ENCODE measurements at regions of chr17 and their contacts with region 1.

Region 1: DNA sequence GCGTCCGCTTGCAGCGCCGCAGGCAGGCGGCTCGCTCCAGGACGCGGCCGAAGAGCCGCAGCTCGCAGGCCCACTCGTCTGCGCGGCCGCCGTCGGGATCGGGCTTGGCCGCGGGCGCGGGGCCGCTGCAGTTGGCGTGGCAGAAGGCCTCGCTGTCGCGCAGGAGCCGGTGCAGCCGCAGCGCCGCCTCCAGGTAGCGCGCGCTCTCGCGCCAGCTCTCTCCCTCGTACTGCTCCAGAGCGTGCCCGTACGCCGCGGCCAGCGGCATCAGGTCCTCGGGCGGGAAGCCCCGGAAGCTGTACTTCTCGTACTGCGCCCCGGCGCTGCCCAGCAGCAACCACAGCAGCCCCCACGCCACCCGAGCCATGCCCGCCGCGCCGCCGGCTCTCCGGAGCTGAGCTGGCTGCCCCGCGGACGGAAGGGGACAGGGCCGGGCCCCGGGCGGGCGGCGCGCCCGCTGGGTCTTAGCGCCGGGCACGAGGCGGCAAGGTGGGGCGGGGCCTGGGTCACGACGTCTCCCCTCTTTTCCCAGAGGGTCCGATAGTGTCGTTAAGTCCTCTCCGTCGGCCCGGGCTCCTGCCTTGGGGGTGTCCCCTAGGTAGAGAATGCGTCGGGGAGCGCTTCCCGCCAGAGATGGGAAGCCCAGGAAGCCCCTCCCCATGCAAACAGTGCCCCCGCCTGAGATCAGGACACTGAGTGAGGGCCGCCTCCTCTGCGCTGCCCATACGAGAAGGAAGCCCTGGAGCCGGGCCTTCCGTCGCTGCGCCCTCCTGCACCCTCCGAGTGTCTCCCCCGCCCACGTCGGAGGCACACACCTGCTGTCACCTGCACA is at the start of gene P3H4:
- DNase-seq: peak; percentile 86
- ATAC-seq: peak; percentile 90
- H3K4me3 Mint-ChIP-seq: peak within 1 kb of the TSS; percentile 76
- H3K27ac Mint-ChIP-seq: peak within 1 kb of the TSS; percentile 58
- H3K4me1 Mint-ChIP-seq: peaks cover 22% of the 10 kb centered on the region
- H3K27me3 Mint-ChIP-seq: peaks cover 2% of the 10 kb centered on the region
- total RNA-seq, gene P3H4: 1.5 to 2.0 TPM

Region 2: GRCh38 chr17:41724476-41725050 is 87.2 kb before region 1 on chr17:
- CTCF ChIA-PET with region 1: no interaction called
- POLR2A ChIA-PET with region 1: no interaction called
- intact Hi-C with region 1: no loop called
- DNase-seq: no peak
- ATAC-seq: no peak
- H3K4me3 Mint-ChIP-seq: no peak overlapping the region
- H3K27ac Mint-ChIP-seq: no peak overlapping the region
- H3K4me1 Mint-ChIP-seq: no peaks in the 10 kb centered on the region
- H3K27me3 Mint-ChIP-seq: no peaks in the 10 kb centered on the region

Region 3: GRCh38 chr17:41835800-41836549 is 24.2 kb after region 1 on chr17 and contains the start of gene NT5C3B:
- CTCF ChIA-PET with region 1: interaction called, 3 read pairs
- POLR2A ChIA-PET with region 1: no interaction called
- intact Hi-C with region 1: loop called in 1 of 2 experiments (anchors 1 kb)
- DNase-seq: peak; percentile 67
- ATAC-seq: peak; percentile 84
- H3K4me3 Mint-ChIP-seq: peak within 1 kb of the TSS; percentile 80
- H3K27ac Mint-ChIP-seq: peak within 1 kb of the TSS; percentile 70
- H3K4me1 Mint-ChIP-seq: peaks cover 13% of the 10 kb centered on the region
- H3K27me3 Mint-ChIP-seq: no peaks in the 10 kb centered on the region
- total RNA-seq, gene NT5C3B: 37.5 to 46.9 TPM